ENCODE measurements at regions of chr9 and their contacts with region 1.

Region 1: GRCh38 chr9:32378993-32379729 is 5.3 kb upstream of the ACO1 start:
- DNase-seq: peak; percentile 70 to 76 (median 73)
- H3K4me3 ChIP-seq: no peak overlapping the region
- H3K4me3 Mint-ChIP-seq: peak overlapping the region in 3 of 8 donors; percentile 2 to 68 (median 11)
- H3K27ac ChIP-seq: no peak overlapping the region
- H3K27ac Mint-ChIP-seq: peak overlapping the region in 4 of 7 donors; percentile 1 to 91 (median 68)
- H3K4me1 ChIP-seq: peaks cover 14% of the 10 kb centered on the region
- H3K4me1 Mint-ChIP-seq: peaks cover 14 to 16% (median 15%) of the 10 kb centered on the region in 4 donors
- H3K27me3 ChIP-seq: no peaks in the 10 kb centered on the region
- H3K27me3 Mint-ChIP-seq: peaks cover 3 to 7% of the 10 kb centered on the region in 2 donors

Region 2: GRCh38 chr9:32398207-32398606 is 19.0 kb after region 1 on chr9:
- CTCF ChIA-PET with region 1: interaction called, 17 read pairs
- POLR2A ChIA-PET with region 1: no interaction called
- intact Hi-C with region 1: no loop called
- DNase-seq: no peak
- H3K4me3 ChIP-seq: no peak overlapping the region
- H3K4me3 Mint-ChIP-seq: no peak overlapping the region
- H3K27ac ChIP-seq: no peak overlapping the region
- H3K27ac Mint-ChIP-seq: no peak overlapping the region
- H3K4me1 ChIP-seq: no peaks in the 10 kb centered on the region
- H3K4me1 Mint-ChIP-seq: peaks cover 0 to 1% (median 0%) of the 10 kb centered on the region in 4 donors
- H3K27me3 ChIP-seq: no peaks in the 10 kb centered on the region
- H3K27me3 Mint-ChIP-seq: no peaks in the 10 kb centered on the region

Region 3: DNA sequence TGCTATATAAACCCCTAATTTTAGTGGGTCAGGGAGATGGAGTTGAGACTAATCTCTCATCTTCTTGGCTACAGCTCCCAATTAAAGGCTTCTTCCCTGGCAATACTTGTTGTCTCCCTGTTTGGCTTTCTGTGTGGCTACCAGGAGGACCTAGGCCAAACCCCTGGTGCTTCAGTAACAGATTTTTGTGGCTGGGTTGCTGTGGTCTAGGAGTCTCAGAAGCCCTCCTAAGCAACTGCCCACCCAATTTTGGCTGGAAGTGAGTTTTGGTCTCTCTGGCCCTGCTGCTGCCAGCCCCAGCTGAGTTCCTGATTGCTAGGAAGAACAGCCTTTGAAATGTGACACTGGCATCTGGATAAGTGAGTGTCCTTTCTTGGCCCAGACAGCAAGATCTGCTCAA is 137.1 kb after region 1 on chr9:
- CTCF ChIA-PET with region 1: interaction called, 12 read pairs
- POLR2A ChIA-PET with region 1: no interaction called
- intact Hi-C with region 1: no loop called
- DNase-seq: no peak
- H3K4me3 ChIP-seq: no peak overlapping the region
- H3K4me3 Mint-ChIP-seq: peak overlapping the region in 1 of 8 donors; percentile 41
- H3K27ac ChIP-seq: no peak overlapping the region
- H3K27ac Mint-ChIP-seq: peak overlapping the region in 5 of 7 donors; percentile 6 to 32 (median 20)
- H3K4me1 ChIP-seq: peaks cover 8% of the 10 kb centered on the region
- H3K4me1 Mint-ChIP-seq: peaks cover 38 to 59% (median 49%) of the 10 kb centered on the region in 4 donors
- H3K27me3 ChIP-seq: no peaks in the 10 kb centered on the region
- H3K27me3 Mint-ChIP-seq: no peaks in the 10 kb centered on the region

Region 4: GRCh38 chr9:32543047-32543446 is 163.9 kb after region 1 on chr9:
- CTCF ChIA-PET with region 1: interaction called, 10 read pairs
- POLR2A ChIA-PET with region 1: no interaction called
- intact Hi-C with region 1: no loop called
- DNase-seq: no peak
- H3K4me3 ChIP-seq: no peak overlapping the region
- H3K4me3 Mint-ChIP-seq: no peak overlapping the region
- H3K27ac ChIP-seq: no peak overlapping the region
- H3K27ac Mint-ChIP-seq: peak overlapping the region in 1 of 7 donors; percentile 5
- H3K4me1 ChIP-seq: peaks cover 11% of the 10 kb centered on the region
- H3K4me1 Mint-ChIP-seq: peaks cover 7 to 23% (median 17%) of the 10 kb centered on the region in 4 donors
- H3K27me3 ChIP-seq: no peaks in the 10 kb centered on the region
- H3K27me3 Mint-ChIP-seq: no peaks in the 10 kb centered on the region

Region 5: GRCh38 chr9:32571969-32572899 is 193.1 kb after region 1 on chr9:
- CTCF ChIA-PET with region 1: interaction called, 659 read pairs
- POLR2A ChIA-PET with region 1: interaction called, 48 read pairs
- intact Hi-C with region 1: loop called (anchors 1 kb)
- DNase-seq: peak; percentile 74 to 89 (median 80)
- H3K4me3 ChIP-seq: peak overlapping the region; percentile 77 to 95
- H3K4me3 Mint-ChIP-seq: peak overlapping the region; percentile 99 to 100 (median 99)
- H3K27ac ChIP-seq: peak overlapping the region; percentile 83
- H3K27ac Mint-ChIP-seq: peak overlapping the region; percentile 96 to 100 (median 99)
- H3K4me1 ChIP-seq: peaks cover 17% of the 10 kb centered on the region
- H3K4me1 Mint-ChIP-seq: peaks cover 19 to 39% (median 26%) of the 10 kb centered on the region in 4 donors
- H3K27me3 ChIP-seq: no peaks in the 10 kb centered on the region
- H3K27me3 Mint-ChIP-seq: peaks cover 0 to 1% of the 10 kb centered on the region in 2 donors

Region 6: DNA sequence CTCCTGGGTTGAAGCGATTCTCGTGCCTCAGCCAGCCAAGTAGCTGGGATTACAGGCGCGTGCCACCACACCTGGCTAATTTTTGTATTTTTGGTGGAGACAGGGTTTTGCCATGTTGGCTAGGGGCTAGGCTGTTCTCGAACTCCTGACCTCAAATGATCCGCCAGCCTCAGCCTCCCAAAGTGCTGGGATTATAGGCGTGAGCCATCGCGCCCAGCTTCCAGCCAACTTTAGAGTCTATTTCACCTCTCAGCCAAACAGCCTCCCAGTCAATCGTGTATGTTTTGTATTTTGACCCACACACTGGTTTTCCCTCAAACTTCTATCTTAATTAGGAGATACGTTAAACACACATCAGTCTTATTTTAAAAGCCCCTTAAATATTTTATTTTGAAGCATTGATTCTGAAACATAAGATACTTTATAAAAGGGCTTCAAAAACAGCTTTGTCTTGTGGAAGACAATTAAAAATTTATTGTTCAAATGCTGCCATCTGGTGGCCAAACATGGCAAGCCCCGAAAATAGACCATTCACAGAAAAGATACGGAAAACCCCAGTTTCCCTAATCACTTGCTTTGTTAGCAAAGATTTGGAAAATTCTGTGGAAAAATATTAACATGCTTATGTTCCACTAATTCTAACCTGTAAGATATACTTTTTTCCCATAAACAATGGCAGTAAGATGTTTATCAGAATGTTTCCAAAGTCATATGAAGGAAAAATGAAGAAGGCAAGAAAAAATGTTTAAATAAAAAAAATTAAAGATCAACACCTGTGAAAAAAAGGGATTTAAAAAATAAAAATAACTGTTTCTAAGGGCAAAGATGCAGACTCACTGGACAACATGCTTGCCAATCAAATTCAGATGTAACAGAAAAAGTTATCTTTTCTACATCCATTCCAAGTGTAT is 589.2 kb after region 1 on chr9:
- CTCF ChIA-PET with region 1: interaction called, 75 read pairs
- POLR2A ChIA-PET with region 1: interaction called, 6 read pairs
- intact Hi-C with region 1: loop called (anchors 1 kb)
- DNase-seq: peak in 4 of 5 donors; percentile 28 to 53 (median 38)
- H3K4me3 ChIP-seq: no peak overlapping the region
- H3K4me3 Mint-ChIP-seq: no peak overlapping the region
- H3K27ac ChIP-seq: no peak overlapping the region
- H3K27ac Mint-ChIP-seq: peak overlapping the region in 1 of 7 donors; percentile 65
- H3K4me1 ChIP-seq: no peaks in the 10 kb centered on the region
- H3K4me1 Mint-ChIP-seq: peaks cover 2 to 4% (median 3%) of the 10 kb centered on the region in 4 donors
- H3K27me3 ChIP-seq: no peaks in the 10 kb centered on the region
- H3K27me3 Mint-ChIP-seq: no peaks in the 10 kb centered on the region

Measured in CD4-positive, alpha-beta memory T cell (primary cell).